ENCODE measurements at regions of chr4 and their contacts with region 1.

Region 1: DNA sequence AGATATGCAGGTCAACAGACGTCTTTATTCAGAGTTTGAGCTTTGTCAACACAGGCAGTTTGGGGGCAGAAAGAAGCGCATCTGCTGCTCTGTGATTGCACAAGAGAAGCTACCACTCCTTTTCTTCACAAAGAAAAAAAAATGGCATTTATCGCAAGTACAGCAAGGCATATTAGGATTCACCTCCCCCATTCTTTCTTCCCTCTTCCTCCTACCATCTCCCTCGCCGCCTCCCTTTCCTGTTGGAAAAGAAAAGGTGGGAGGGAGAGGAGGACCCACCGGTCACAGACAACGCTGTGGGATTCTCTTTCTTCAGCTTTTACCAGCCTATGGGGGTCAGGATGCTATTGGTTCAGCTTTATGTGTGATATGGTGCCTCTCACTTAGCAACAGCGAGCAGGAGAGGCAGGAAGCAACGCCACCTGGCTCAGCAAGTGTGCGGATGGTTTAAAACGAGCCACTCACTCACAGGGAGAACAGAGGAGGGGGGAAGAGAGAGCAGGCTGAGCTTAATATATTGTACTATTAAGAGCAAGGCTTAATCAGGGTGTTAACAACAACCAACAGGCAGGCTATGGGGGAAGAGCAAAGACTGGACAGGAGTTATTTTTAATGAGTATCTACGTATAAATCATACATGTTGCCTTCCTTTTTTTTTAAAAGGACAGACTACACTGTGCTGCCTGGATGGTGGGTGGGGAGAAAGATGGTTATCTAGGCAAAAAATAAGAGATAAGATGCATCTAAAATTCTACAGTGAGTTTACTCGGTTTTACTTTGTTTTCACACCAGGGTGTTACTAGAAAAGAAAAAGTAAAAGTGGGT is 104.7 kb downstream of the MAML3 start:
- DNase-seq: peak; percentile 48 to 91
- ATAC-seq: peak; percentile 87 to 93
- H3K4me3 ChIP-seq: peak overlapping the region; percentile 35
- H3K27ac ChIP-seq: peak overlapping the region; percentile 88 to 91
- H3K4me1 ChIP-seq: peaks cover 91% of the 10 kb centered on the region
- CTCF ChIP-seq: no peak
- EP300 ChIP-seq: no peak; a peak in 1 of 5 replicates
- POLR2A ChIP-seq: peak; percentile 36; the same call in 1 of the 2 replicates
- RAD21 ChIP-seq: peak; percentile 22 to 40; a peak in 3 of 5 replicates

Region 2: GRCh38 chr4:140012688-140013486 is 36.3 kb before region 1 on chr4:
- CTCF ChIA-PET with region 1: interaction called, 26 read pairs
- POLR2A ChIA-PET with region 1: no interaction called
- DNase-seq: peak; percentile 57 to 93
- ATAC-seq: peak; percentile 98
- H3K4me3 ChIP-seq: 0 out of 3 replicates have a peak overlapping the region, but pooled peaks have one; percentile 6
- H3K27ac ChIP-seq: peak overlapping the region; percentile 91 to 92
- H3K4me1 ChIP-seq: peaks cover 47% of the 10 kb centered on the region
- CTCF ChIP-seq: peak; percentile 75
- EP300 ChIP-seq: peak; percentile 66 to 71; a peak in 2 of 5 replicates
- POLR2A ChIP-seq: no peak
- RAD21 ChIP-seq: peak; percentile 92 to 94

Region 3: DNA sequence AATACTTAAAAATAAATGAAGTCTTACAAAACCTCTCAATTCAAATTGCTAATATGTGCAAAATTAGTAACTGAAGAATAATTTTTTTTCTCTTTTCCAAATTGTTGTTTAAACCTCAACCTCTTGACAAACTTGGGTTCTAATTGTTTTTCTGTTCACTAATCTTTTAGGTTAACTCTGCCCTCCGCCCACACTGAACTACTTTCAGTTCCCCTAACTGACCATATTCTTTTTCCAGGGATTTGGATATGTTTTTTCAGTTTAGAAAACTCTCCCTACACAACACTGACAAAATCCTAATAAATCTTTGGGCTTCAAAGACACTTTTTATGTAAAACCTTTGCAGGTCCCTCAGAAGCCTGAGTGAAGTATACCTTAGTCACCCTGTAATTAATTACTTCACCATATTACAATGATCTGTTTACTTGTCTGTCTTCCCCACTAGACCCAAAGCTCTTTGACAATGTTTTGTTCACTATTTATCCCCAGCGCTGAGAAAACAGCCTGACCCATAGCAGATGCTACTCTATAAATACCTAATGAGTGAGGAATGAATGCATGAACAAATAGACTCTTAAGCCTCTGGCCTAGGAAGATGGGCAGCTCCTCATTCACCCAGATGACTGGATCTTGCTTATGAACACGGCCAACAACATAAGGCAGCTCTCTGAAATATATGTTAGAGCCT is 30.2 kb before region 1 on chr4:
- CTCF ChIA-PET with region 1: interaction called, 4 read pairs
- POLR2A ChIA-PET with region 1: interaction called, 10 read pairs
- DNase-seq: peak in 1 of 2 experiments; percentile 91
- ATAC-seq: peak; percentile 77 to 87
- H3K4me3 ChIP-seq: peak overlapping the region; percentile 19; the same call in 1 of the 3 replicates
- H3K27ac ChIP-seq: peak overlapping the region; percentile 93
- H3K4me1 ChIP-seq: peaks cover 76% of the 10 kb centered on the region
- CTCF ChIP-seq: no peak
- EP300 ChIP-seq: peak in 1 of 2 experiments; percentile 20; a peak in 1 of 5 replicates
- POLR2A ChIP-seq: no peak
- RAD21 ChIP-seq: peak; percentile 17 to 20; a peak in 1 of 5 replicates

Region 4: DNA sequence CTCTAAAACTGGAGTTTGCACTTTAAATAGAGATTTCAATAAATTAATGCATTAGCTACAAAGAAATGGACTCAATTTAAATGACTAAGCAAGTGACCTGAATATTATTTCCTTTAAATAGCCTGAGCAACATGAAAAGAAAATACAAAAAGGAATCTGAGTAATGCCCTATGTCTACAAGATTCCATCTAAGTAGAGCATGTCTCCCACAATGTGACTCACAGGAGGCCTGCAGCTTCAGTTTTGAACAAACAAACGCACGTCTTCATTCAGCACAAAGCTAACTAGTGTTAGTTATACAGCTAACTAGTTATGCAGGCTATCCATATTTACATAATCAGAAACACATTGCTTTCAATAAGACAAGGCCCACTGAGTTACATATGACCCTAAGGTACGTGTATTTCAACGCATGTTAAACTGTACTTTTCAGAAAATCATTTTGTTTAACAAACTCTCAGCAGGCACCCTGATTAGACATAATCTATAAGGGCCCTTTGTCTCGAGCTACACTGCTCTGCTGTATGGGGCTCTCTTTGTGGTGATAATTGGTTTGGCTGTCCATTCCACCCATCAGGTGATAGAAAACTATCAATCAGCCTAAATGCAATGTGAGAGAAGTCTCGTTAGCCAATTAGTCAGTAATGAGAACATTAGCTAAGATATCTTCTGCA is 11.7 kb before region 1 on chr4:
- CTCF ChIA-PET with region 1: interaction called, 20 read pairs
- POLR2A ChIA-PET with region 1: interaction called, 16 read pairs
- DNase-seq: peak; percentile 64 to 93
- ATAC-seq: peak; percentile 94 to 97
- H3K4me3 ChIP-seq: peak overlapping the region; percentile 18; the same call in 1 of the 3 replicates
- H3K27ac ChIP-seq: peak overlapping the region; percentile 96
- H3K4me1 ChIP-seq: peaks cover 57% of the 10 kb centered on the region
- CTCF ChIP-seq: no peak
- EP300 ChIP-seq: peak; percentile 81; a peak in 4 of 5 replicates
- POLR2A ChIP-seq: no peak
- RAD21 ChIP-seq: peak in 1 of 2 experiments; percentile 37; a peak in 2 of 5 replicates

Region 5: GRCh38 chr4:140095694-140096482 is 46.7 kb after region 1 on chr4:
- CTCF ChIA-PET with region 1: interaction called, 4 read pairs
- POLR2A ChIA-PET with region 1: interaction called, 12 read pairs
- DNase-seq: peak; percentile 67 to 98
- ATAC-seq: peak; percentile 77 to 80
- H3K4me3 ChIP-seq: peak overlapping the region; percentile 13; the same call in 2 of the 3 replicates
- H3K27ac ChIP-seq: peak overlapping the region; percentile 97 to 99
- H3K4me1 ChIP-seq: peaks cover 98% of the 10 kb centered on the region
- CTCF ChIP-seq: no peak
- EP300 ChIP-seq: peak; percentile 94 to 95; a peak in 4 of 5 replicates
- POLR2A ChIP-seq: peak; percentile 34
- RAD21 ChIP-seq: 0 out of 5 replicates have a peak, but pooled peaks of 1 of the 2 experiments have one; percentile 30

Region 6: DNA sequence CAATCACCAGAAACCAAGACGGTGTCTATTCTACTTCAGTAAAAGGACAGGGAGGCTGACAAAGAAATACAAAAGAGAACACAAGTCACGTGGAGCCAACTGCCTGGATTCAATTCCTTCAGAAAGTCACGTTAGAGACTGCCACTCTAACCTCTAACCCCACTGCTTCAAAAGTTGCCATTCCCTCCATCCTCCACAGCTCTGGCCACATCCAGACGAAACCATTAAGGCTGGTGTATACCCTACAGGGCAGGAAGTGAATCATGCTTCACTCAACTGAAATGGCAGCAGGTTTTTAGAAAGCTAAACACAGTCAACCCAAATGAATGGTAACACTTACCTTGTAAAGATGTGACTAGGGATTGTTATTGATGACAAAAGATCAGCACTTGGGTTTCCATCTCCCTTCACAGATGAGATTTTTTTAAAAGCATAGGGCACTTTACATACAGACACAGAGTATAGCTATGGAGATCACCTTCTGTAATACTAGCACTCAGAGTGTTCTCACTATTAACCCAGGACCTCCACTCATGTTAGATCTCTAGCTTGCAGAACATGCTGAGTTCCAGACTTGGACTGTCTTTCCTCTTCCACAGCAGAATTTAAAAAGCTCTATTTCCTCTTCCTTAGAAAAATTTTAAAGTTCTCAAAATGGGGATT is 67.3 kb after region 1 on chr4:
- CTCF ChIA-PET with region 1: no interaction called
- POLR2A ChIA-PET with region 1: no interaction called
- DNase-seq: peak in 1 of 2 experiments; percentile 48
- ATAC-seq: peak; percentile 87 to 91
- H3K4me3 ChIP-seq: no peak overlapping the region
- H3K27ac ChIP-seq: peak overlapping the region; percentile 63 to 83
- H3K4me1 ChIP-seq: peaks cover 39% of the 10 kb centered on the region
- CTCF ChIP-seq: no peak
- EP300 ChIP-seq: no peak
- POLR2A ChIP-seq: no peak
- RAD21 ChIP-seq: no peak

Region 7: DNA sequence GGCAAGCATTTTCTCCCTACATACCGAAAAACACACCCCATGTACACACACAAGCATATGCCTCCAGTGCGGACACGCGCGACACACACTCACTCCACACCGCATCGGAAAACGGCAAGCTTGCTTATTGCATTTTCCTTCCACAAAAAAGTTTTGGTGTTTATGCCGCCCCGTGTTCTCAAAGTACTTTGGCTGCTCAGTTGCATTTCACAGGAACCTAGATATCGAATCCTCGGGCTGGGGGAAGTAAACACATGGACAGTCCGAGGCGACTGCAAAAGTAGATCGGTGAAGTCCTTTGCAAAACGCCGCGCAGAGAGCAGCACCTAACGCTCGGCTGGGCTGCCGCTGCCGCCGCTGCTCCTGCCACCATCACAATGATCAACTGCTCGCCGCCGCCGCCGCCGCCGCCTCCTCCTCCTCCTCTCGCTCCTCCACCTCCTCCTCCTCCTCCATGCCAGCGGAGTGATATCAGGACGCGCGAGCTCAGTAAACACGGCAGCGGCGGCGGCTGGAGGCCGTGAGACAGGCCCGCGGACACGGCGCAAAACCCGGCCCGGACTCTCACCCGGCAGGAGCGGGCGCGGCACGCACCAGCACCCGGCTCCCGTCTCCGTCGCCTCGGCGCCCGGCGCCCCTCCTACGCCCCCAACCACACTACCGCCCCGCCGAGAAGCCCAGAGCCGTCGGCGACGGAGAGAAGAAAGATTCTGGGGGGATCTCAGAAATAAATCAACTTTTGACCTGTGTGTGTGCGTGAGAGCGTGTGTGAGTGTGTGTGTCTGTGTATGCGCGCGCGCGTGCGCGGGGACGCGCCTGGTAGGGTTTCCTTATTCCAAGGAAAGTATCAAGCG is 104.7 kb after region 1 on chr4 and contains the start of gene MAML3:
- CTCF ChIA-PET with region 1: interaction called, 3 read pairs
- POLR2A ChIA-PET with region 1: interaction called, 20 read pairs
- DNase-seq: peak in 1 of 2 experiments; percentile 98
- ATAC-seq: peak; percentile 6 to 31; a peak in 5 of 6 replicates
- H3K4me3 ChIP-seq: peak within 1 kb of the TSS; percentile 80
- H3K27ac ChIP-seq: peak within 1 kb of the TSS; percentile 99
- H3K4me1 ChIP-seq: peaks cover 24% of the 10 kb centered on the region
- CTCF ChIP-seq: no peak
- EP300 ChIP-seq: peak in 1 of 2 experiments; percentile 29; a peak in 1 of 5 replicates
- POLR2A ChIP-seq: peak; percentile 51
- RAD21 ChIP-seq: peak in 1 of 2 experiments; percentile 57; a peak in 3 of 5 replicates
- polyA plus RNA-seq, gene MAML3: 18.1 and 22.2 TPM in 2 replicates

Measured in A549 (cell line).